PC-9 (cell line): ENCODE measurements at regions of chr2 and their contacts with region 1.

Region 1: DNA sequence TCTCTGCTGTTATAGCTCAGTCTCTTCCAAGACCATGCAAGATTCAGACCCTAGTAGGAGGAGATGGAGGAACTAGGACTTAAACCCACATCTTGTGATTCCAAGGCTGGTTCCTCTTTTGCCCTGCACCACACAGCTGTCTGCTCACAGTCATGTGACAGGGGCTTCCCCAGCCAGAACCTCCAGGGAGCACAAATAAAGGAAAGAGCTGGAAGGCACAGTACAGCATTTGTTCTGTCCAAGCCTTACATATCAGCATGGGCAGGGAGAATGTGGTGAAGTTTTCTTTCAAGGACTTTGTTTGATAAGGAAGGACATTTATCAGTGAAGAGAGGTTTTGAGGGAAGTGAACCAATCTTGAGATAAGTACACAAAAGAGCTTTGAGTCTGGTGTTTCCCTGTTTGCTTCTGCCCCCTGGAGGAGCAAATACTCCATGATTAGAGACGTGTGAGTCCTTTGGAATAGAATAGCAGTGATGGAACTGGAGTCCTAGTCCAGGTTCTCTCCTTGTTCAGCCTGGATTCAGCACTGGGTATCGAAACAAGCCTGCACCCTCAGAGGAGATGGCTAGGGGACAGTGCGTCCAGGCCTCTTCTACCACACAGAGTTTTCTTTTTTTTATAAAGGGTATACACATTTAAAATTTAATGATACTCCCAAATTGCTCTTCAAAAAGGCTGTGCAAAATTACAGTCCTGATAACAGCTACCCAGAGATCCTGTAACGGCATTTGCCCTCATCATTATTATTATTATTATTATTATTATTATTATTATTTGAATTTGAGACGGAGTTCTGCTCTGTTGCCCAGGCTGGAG is 24.6 kb upstream of the CASP10 start:
- DNase-seq: peak; percentile 57 to 63
- H3K4me3 ChIP-seq: no peak overlapping the region
- H3K27ac ChIP-seq: no peak overlapping the region
- H3K4me1 ChIP-seq: no peaks in the 10 kb centered on the region
- H3K27me3 ChIP-seq: no peaks in the 10 kb centered on the region
- CTCF ChIP-seq: peak; percentile 76

Region 2: GRCh38 chr2:200901459-200902072 is 256.8 kb before region 1 on chr2:
- CTCF ChIA-PET with region 1: interaction called, 5 read pairs
- POLR2A ChIA-PET with region 1: no interaction called
- intact Hi-C with region 1: loop called (anchors 1 kb)
- DNase-seq: peak; percentile 68 to 75
- H3K4me3 ChIP-seq: no peak overlapping the region
- H3K27ac ChIP-seq: no peak overlapping the region
- H3K4me1 ChIP-seq: no peaks in the 10 kb centered on the region
- H3K27me3 ChIP-seq: no peaks in the 10 kb centered on the region
- CTCF ChIP-seq: peak; percentile 81

Region 3: DNA sequence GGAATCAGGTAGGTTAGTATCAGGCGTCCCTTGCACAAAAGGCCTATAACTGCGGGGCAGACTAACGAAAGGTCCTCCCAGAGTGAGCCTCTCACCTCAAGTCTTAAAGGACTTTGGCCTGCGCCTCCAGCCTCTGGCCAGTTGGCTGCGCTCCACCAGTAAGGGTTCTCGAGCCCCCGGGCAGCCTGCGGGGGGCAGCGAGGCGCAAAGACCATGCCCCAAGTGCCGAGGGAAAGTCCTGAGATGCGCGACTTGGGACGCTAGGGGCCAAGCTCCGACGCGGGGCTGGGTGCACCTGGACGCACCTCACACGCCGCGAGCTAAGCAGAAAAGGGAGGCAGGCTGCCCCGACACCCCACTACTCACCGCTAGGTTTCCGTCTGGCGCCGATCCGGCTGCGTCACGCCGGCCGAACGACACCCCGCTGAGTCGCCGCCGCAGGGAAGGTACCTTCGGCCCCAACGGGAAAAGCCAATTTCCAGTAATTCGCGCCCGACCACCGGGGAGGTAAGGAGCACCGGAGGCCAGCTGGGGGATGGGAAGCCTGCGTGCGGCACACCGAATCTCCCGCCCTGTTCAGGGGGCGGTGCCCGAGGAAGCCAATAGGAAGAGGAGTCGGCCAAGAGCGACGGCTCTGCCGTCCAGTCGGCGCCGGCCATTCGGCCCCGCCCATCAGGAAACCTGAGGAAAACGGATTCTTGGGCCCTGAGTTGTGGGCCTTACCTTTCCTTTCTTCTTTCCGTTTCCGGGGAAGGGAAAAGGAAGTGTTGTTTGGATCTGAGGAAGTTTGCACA is 195.0 kb before region 1 on chr2 and contains the start of gene ORC2:
- CTCF ChIA-PET with region 1: interaction called, 3 read pairs
- POLR2A ChIA-PET with region 1: no interaction called
- intact Hi-C with region 1: loop called (anchors 10 kb)
- DNase-seq: peak; percentile 87 to 96
- H3K4me3 ChIP-seq: peak within 1 kb of the TSS; percentile 95
- H3K27ac ChIP-seq: peak within 1 kb of the TSS; percentile 76
- H3K4me1 ChIP-seq: peaks cover 51% of the 10 kb centered on the region
- H3K27me3 ChIP-seq: no peaks in the 10 kb centered on the region
- CTCF ChIP-seq: peak; percentile 65; the same call in 1 of the 2 replicates
- total RNA-seq, gene ORC2: 34.0 and 43.3 TPM in 2 replicates

Region 4: GRCh38 chr2:201344663-201345366 is 186.5 kb after region 1 on chr2:
- CTCF ChIA-PET with region 1: no interaction called
- POLR2A ChIA-PET with region 1: no interaction called
- intact Hi-C with region 1: no loop called
- DNase-seq: no peak
- H3K4me3 ChIP-seq: no peak overlapping the region
- H3K27ac ChIP-seq: no peak overlapping the region
- H3K4me1 ChIP-seq: no peaks in the 10 kb centered on the region
- H3K27me3 ChIP-seq: no peaks in the 10 kb centered on the region
- CTCF ChIP-seq: no peak; the same call in 1 of the 2 replicates